SK-N-SH (cell line): ENCODE measurements at regions of chr7 and their contacts with region 1.

Region 1: GRCh38 chr7:98745722-98746318 is 124.0 kb downstream of the TMEM130 start:
- DNase-seq: peak; percentile 79
- H3K4me3 ChIP-seq: peak overlapping the region in 1 of 2 experiments; percentile 56; a peak in 1 of 4 replicates
- H3K27ac ChIP-seq: no peak overlapping the region
- H3K4me1 ChIP-seq: no peaks in the 10 kb centered on the region
- H3K27me3 ChIP-seq: no peaks in the 10 kb centered on the region
- CTCF ChIP-seq: peak; percentile 59
- EP300 ChIP-seq: no peak
- RAD21 ChIP-seq: peak; percentile 79

Region 2: GRCh38 chr7:98434095-98434494 is 311.7 kb before region 1 on chr7:
- CTCF ChIA-PET with region 1: interaction called, 118 read pairs
- POLR2A ChIA-PET with region 1: no interaction called
- DNase-seq: no peak
- H3K4me3 ChIP-seq: no peak overlapping the region
- H3K27ac ChIP-seq: no peak overlapping the region
- H3K4me1 ChIP-seq: no peaks in the 10 kb centered on the region
- H3K27me3 ChIP-seq: peaks cover 18% of the 10 kb centered on the region; the same call in 1 of the 2 replicates
- CTCF ChIP-seq: no peak
- EP300 ChIP-seq: no peak
- RAD21 ChIP-seq: no peak

Region 3: GRCh38 chr7:98617051-98617959 is 128.5 kb before region 1 on chr7 and contains the start of gene NPTX2:
- CTCF ChIA-PET with region 1: interaction called, 12 read pairs
- POLR2A ChIA-PET with region 1: interaction called, 3 read pairs
- DNase-seq: peak; percentile 99
- H3K4me3 ChIP-seq: peak within 1 kb of the TSS in 1 of 2 experiments; percentile 52; a peak in 2 of 4 replicates
- H3K27ac ChIP-seq: peak within 1 kb of the TSS in 1 of 2 experiments; percentile 28; a peak in 1 of 4 replicates
- H3K4me1 ChIP-seq: peaks cover 0 to 48% of the 10 kb centered on the region in 2 experiments; a peak in 2 of 4 replicates
- H3K27me3 ChIP-seq: no peaks in the 10 kb centered on the region
- CTCF ChIP-seq: no peak
- EP300 ChIP-seq: no peak
- RAD21 ChIP-seq: peak; percentile 48
- polyA plus RNA-seq, gene NPTX2: 0.41 and 1.2 TPM in 2 replicates

Region 4: DNA sequence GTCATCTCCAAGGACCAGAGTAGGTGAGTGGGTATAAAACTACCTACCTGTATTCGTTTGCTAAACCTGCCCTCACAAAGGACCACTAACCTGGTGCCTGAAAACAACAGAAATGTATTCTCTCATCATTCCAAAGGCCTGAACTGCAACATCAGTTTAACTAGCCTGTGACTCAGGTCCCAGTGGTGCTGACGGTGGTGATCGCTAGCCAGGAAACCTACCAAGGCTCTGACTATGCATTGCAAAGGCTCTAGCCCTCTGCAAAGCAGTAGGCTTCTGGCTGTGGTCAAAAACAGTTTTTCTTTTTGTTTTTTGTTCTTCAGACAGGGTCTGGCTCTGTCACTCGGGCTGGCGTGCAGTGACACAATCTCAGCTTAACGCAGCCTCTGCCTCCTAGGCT is 21.2 kb before region 1 on chr7:
- CTCF ChIA-PET with region 1: interaction called, 27 read pairs
- POLR2A ChIA-PET with region 1: no interaction called
- DNase-seq: no peak
- H3K4me3 ChIP-seq: no peak overlapping the region
- H3K27ac ChIP-seq: no peak overlapping the region
- H3K4me1 ChIP-seq: no peaks in the 10 kb centered on the region
- H3K27me3 ChIP-seq: no peaks in the 10 kb centered on the region
- CTCF ChIP-seq: no peak
- EP300 ChIP-seq: no peak
- RAD21 ChIP-seq: no peak

Region 5: GRCh38 chr7:98760201-98760651 is 14.4 kb after region 1 on chr7:
- CTCF ChIA-PET with region 1: interaction called, 13 read pairs
- POLR2A ChIA-PET with region 1: no interaction called
- DNase-seq: no peak
- H3K4me3 ChIP-seq: no peak overlapping the region
- H3K27ac ChIP-seq: no peak overlapping the region
- H3K4me1 ChIP-seq: no peaks in the 10 kb centered on the region; a peak in 1 of 4 replicates
- H3K27me3 ChIP-seq: no peaks in the 10 kb centered on the region
- CTCF ChIP-seq: no peak
- EP300 ChIP-seq: no peak
- RAD21 ChIP-seq: no peak

Region 6: GRCh38 chr7:98826387-98827231 is 80.8 kb after region 1 on chr7:
- CTCF ChIA-PET with region 1: interaction called, 249 read pairs
- POLR2A ChIA-PET with region 1: no interaction called
- DNase-seq: peak; percentile 88
- H3K4me3 ChIP-seq: no peak overlapping the region
- H3K27ac ChIP-seq: peak overlapping the region in 1 of 2 experiments; percentile 62; a peak in 2 of 4 replicates
- H3K4me1 ChIP-seq: peaks cover 0 to 17% of the 10 kb centered on the region in 2 experiments; a peak in 1 of 4 replicates
- H3K27me3 ChIP-seq: no peaks in the 10 kb centered on the region
- CTCF ChIP-seq: no peak
- EP300 ChIP-seq: peak in 1 of 2 experiments; percentile 69; a peak in 2 of 4 replicates
- RAD21 ChIP-seq: peak; percentile 32; the same call in 1 of the 2 replicates

Region 7: DNA sequence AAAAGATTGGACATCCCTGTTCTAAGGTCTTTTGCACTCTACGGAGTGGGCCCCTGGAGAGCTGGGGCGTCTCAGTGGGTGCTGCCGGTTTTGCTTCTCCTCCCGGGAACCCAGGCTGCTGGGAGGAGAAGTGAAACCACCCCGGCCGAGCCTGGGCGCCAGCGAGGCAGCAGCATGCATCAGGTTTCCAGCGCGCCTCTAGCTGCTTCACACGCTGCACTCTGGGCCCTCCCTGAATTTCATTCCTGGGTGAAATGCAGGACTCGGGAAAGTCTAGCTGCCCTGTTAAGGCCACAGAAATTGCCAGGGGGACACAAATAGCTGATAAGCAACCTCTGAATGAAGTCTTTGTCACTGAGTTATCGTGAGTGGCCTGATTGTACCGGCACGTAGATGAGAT is 260.0 kb after region 1 on chr7:
- CTCF ChIA-PET with region 1: no interaction called
- POLR2A ChIA-PET with region 1: no interaction called
- DNase-seq: no peak
- H3K4me3 ChIP-seq: no peak overlapping the region
- H3K27ac ChIP-seq: no peak overlapping the region
- H3K4me1 ChIP-seq: no peaks in the 10 kb centered on the region
- H3K27me3 ChIP-seq: no peaks in the 10 kb centered on the region
- CTCF ChIP-seq: no peak
- EP300 ChIP-seq: no peak
- RAD21 ChIP-seq: no peak